OCI-LY7 (cell line): ENCODE measurements at regions of chr17 and their contacts with region 1.

Region 1: DNA sequence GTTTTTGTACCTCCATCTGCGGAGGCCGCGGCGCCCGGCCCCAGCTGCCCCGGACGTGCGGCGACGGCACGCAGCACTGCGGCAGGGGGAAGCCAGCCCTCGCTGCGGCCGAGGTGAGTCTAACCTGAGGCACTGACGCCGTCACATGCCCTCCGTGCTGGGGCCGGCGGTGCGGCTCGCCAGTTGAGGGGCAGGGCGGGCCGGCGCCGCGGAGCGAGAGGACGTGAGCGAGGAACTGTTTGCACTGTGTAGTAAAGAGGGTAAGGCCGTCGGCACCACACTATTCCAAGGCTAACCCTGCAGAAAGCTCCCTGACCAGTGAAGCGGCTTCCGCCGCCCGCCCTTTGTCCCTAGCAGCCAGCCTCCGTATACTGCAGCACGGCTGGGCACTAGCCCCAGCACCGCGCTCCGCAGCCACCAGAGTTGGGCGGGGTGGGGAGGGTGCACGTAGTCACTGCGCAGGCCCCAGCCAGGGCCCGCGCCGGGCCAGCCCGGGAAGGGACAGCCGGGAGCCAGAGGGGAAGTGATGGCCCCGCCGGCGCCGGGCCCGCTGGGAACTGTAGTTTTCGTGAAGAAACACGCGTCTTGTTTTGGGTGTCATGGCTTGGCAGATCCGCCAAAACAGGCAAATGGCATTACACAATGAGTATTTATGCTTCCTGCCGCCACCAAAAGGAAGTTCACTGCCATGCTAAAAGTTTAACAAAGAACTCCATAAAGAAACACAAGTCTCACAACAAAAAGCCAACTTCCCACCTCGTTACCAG is 580 bp upstream of the KANSL1 start:
- DNase-seq: peak; percentile 94
- H3K4me3 ChIP-seq: peak overlapping the region; percentile 74
- H3K27ac ChIP-seq: peak overlapping the region; percentile 84
- H3K4me1 ChIP-seq: peaks cover 40% of the 10 kb centered on the region
- CTCF ChIP-seq: 0 out of 2 replicates have a peak, but pooled peaks have one; percentile 37

Region 2: DNA sequence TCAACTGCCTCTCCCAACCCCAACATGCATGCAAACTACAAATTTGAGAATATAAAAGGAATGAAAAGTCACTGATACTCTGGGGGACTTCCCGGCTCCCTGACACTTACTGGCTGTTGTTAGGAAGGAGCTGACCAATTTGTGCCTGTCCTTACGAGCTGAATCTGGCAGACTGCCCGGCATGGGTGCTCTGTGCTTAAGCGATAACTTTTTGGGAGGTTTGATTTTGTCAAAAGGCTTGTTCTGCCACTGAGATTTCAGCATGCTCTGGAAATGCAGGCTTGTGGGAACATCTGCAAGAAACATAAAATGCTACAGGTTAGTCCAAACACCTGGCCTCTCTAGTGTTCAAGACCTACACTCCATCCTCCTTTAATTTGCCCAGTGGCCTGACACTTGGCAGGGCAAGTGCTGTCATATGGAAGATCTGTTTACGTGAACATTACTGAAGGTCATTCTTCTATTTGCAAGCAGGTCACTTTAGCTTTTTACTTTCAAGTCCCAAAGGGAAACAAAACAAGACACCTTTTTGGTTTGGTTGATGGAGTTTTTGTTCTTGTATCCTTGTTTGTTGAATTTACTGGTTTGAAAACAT is 154.1 kb before region 1 on chr17:
- CTCF ChIA-PET with region 1: interaction called, 10 read pairs
- POLR2A ChIA-PET with region 1: interaction called, 3 read pairs
- intact Hi-C with region 1: no loop called
- DNase-seq: no peak
- H3K4me3 ChIP-seq: no peak overlapping the region
- H3K27ac ChIP-seq: no peak overlapping the region
- H3K4me1 ChIP-seq: peaks cover 7% of the 10 kb centered on the region
- CTCF ChIP-seq: no peak

Region 3: DNA sequence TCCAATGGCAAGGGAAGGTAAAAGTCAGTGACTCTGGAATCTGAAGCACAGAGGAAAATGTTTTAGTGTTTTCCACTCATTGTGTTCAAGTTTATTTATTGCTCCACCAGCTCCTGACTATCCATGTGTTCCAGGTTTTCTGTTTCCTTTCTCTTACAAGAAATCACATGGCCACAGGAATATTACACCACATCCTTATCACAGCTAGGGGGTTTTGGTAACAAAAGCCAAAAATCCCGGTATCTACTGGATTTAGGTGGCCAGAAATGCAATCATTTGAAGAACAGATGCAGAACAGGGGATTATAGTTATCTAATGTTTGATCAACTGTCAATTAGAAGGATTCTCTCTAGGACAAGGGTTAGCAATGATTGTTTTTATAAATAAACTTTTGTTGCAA is 146.9 kb before region 1 on chr17:
- CTCF ChIA-PET with region 1: no interaction called
- POLR2A ChIA-PET with region 1: interaction called, 3 read pairs
- intact Hi-C with region 1: loop called (anchors 5 kb)
- DNase-seq: no peak
- H3K4me3 ChIP-seq: no peak overlapping the region
- H3K27ac ChIP-seq: no peak overlapping the region
- H3K4me1 ChIP-seq: peaks cover 7% of the 10 kb centered on the region
- CTCF ChIP-seq: no peak

Region 4: DNA sequence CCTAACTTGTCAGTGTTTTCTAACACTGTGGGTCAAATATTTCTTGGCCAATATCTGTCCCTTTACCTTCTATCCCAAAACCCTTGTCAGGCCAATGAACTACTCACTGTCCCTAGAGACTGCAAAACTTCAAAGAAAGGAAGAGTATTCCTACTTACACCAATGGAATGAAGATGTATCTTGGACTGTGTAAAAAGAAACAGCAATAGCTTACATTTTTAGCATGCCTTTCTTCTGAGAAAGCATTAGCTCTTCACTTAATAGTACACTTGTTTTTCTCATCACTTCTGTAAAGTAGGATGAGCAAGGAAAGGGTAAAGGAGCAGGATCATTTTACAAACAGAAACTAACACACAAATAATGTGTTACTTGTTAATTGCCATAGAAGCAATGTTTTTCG is 120.8 kb before region 1 on chr17:
- CTCF ChIA-PET with region 1: no interaction called
- POLR2A ChIA-PET with region 1: no interaction called
- intact Hi-C with region 1: no loop called
- DNase-seq: no peak
- H3K4me3 ChIP-seq: no peak overlapping the region
- H3K27ac ChIP-seq: no peak overlapping the region
- H3K4me1 ChIP-seq: peaks cover 7% of the 10 kb centered on the region
- CTCF ChIP-seq: no peak

Region 5: DNA sequence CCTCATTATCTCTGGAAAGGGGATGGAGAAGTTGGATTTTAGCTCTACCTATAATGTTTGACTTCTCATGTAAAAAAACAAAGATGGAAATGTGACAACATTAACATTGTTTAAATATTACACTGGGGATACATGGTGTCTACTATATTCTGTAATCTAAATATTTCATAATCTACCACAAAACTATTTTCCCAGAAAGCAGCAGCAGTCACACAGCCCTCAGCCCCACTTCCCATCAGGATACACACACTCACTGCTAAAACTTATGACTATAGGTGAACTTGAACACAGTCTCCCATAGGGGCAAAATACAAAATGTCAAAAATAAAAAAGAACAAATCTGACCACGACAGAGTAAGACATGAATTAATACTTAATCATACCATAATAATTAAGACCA is 96.3 kb before region 1 on chr17:
- CTCF ChIA-PET with region 1: interaction called, 12 read pairs
- POLR2A ChIA-PET with region 1: no interaction called
- intact Hi-C with region 1: no loop called
- DNase-seq: no peak
- H3K4me3 ChIP-seq: no peak overlapping the region
- H3K27ac ChIP-seq: no peak overlapping the region
- H3K4me1 ChIP-seq: peaks cover 5% of the 10 kb centered on the region
- CTCF ChIP-seq: no peak

Region 6: GRCh38 chr17:46139432-46140210 is 54.2 kb before region 1 on chr17:
- CTCF ChIA-PET with region 1: interaction called, 5 read pairs
- POLR2A ChIA-PET with region 1: no interaction called
- intact Hi-C with region 1: loop called (anchors 2 kb)
- DNase-seq: peak; percentile 76
- H3K4me3 ChIP-seq: peak overlapping the region; percentile 62
- H3K27ac ChIP-seq: peak overlapping the region; percentile 87
- H3K4me1 ChIP-seq: peaks cover 94% of the 10 kb centered on the region
- CTCF ChIP-seq: no peak

Region 7: DNA sequence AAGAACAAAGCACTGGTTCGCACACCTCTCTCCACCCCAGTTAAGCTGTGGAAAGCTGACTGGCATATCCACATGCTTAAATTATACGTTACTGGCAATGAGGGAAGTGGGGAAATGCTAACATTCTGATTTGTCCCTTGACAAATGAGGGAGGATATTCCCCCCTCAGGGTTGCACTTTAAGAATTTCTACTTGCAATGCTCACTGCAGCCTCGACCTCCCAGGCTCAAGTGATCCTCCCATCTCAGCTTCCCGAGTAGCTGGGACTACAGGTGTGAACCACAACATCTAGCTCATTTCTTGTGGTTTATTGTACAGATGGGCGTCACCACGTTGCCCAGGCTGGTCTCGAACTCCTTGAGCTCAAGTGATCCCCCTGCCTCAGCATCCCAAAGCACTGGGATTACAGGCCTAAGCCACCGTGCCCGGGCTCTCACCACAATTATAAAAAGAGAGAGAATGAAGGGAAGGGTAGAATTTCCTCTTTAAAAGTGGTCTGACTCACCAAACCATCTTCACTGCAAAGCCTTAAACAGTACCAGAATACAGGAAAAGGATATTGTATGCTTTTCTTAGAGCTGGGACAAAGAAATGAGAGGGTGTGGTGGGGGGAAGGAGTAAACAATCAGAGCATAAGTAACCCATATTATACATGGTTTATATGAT is 39.5 kb before region 1 on chr17:
- CTCF ChIA-PET with region 1: no interaction called
- POLR2A ChIA-PET with region 1: interaction called, 3 read pairs
- intact Hi-C with region 1: loop called (anchors 2 kb)
- DNase-seq: peak; percentile 46
- H3K4me3 ChIP-seq: peak overlapping the region; percentile 53
- H3K27ac ChIP-seq: peak overlapping the region; percentile 89
- H3K4me1 ChIP-seq: peaks cover 98% of the 10 kb centered on the region
- CTCF ChIP-seq: no peak